ENCODE measurements at regions of chr2 and their contacts with region 1.

Region 1: GRCh38 chr2:185738679-185739472 is at the start of gene FSIP2:
- DNase-seq: peak; percentile 9
- ATAC-seq: peak; percentile 88
- H3K4me3 ChIP-seq: peak within 1 kb of the TSS; percentile 12; the same call in 1 of the 2 replicates
- H3K27ac ChIP-seq: no peak within 1 kb of the TSS
- H3K4me1 ChIP-seq: no peaks in the 10 kb centered on the region
- H3K27me3 ChIP-seq: no peaks in the 10 kb centered on the region
- CTCF ChIP-seq: peak; percentile 46
- POLR2A ChIP-seq: no peak
- RAD21 ChIP-seq: peak; percentile 26; the same call in 1 of the 2 replicates
- total RNA-seq, gene FSIP2: under 0.01 TPM in 1 of 2 replicates, not detected in the other

Region 2: GRCh38 chr2:184599872-184600222 is 1139.0 kb before region 1 on chr2:
- CTCF ChIA-PET with region 1: no interaction called
- POLR2A ChIA-PET with region 1: no interaction called
- dilution Hi-C with region 1: no loop called
- in situ Hi-C with region 1: no loop called
- intact Hi-C with region 1: loop called (anchors 10 kb)
- DNase-seq: peak; percentile 20
- ATAC-seq: no peak
- H3K4me3 ChIP-seq: peak overlapping the region; percentile 82
- H3K27ac ChIP-seq: no peak overlapping the region
- H3K4me1 ChIP-seq: no peaks in the 10 kb centered on the region; the same call in 1 of the 2 replicates
- H3K27me3 ChIP-seq: no peaks in the 10 kb centered on the region
- CTCF ChIP-seq: no peak
- POLR2A ChIP-seq: no peak
- RAD21 ChIP-seq: no peak